HepG2 (cell line): ENCODE measurements at regions of chr11 and their contacts with region 1.

Region 1: DNA sequence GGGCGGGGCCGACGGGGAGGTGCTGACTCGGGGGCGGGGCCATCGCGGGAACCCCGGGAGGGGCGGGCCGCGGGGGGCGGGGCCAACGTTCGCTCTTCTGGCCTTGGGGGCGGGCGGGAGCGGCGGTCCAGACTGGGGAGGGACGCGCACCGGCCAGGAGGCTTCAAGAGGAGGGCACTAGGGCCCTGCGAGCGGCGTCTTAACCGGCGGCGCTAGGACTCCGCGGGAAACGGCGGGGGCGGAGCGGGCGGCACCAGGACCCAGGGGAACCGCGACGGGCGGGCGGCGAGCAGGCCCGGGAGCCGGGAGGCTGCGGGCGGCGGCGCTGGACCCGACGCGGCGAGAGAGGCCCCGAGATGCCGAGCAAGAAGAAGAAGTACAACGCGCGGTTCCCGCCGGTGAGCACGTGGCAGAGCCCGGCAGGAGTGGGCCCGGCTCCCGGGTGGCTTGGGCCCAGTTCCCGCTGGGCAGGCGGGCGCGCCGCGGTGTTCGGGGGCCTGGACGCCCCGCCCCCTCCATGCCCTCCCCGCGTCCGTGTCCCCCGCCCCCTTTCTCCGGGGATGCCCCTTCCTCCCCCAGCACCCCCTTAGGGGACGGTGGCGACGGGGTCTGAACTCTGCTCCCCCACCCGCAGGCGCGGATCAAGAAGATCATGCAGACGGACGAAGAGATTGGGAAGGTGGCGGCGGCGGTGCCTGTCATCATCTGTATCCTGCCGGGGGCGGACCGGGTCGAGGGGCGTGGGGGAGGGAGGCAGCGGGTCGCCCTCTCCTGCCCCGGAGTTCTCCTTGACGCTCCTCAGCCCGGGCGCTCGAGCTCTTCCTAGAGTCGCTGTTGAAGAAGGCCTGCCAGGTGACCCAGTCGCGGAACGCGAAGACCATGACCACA is at the start of gene DRAP1:
- DNase-seq: peak; percentile 94
- ATAC-seq: peak; percentile 89
- H3K4me3 ChIP-seq: peak within 1 kb of the TSS; percentile 88 to 98 (median 92)
- H3K27ac ChIP-seq: peak within 1 kb of the TSS; percentile 75
- H3K4me1 ChIP-seq: peaks cover 46% of the 10 kb centered on the region
- H3K27me3 ChIP-seq: no peaks in the 10 kb centered on the region
- CTCF ChIP-seq: 0 out of 2 replicates have a peak, but pooled peaks have one; percentile 17
- EP300 ChIP-seq: peak in 1 of 2 experiments; percentile 36; a peak in 1 of 4 replicates
- POLR2A ChIP-seq: peak in 1 of 2 experiments; percentile 46; a peak in 2 of 4 replicates
- RAD21 ChIP-seq: peak; percentile 79
- total RNA-seq, gene DRAP1: 31.5 and 52.3 TPM in 2 replicates

Region 2: GRCh38 chr11:65773784-65774411 is 145.5 kb before region 1 on chr11:
- CTCF ChIA-PET with region 1: no interaction called
- POLR2A ChIA-PET with region 1: no interaction called
- in situ Hi-C with region 1: no loop called
- intact Hi-C with region 1: no loop called
- DNase-seq: no peak
- ATAC-seq: no peak
- H3K4me3 ChIP-seq: no peak overlapping the region
- H3K27ac ChIP-seq: no peak overlapping the region
- H3K4me1 ChIP-seq: peaks cover 38% of the 10 kb centered on the region
- H3K27me3 ChIP-seq: no peaks in the 10 kb centered on the region
- CTCF ChIP-seq: peak; percentile 45
- EP300 ChIP-seq: no peak
- POLR2A ChIP-seq: no peak
- RAD21 ChIP-seq: no peak

Region 3: DNA sequence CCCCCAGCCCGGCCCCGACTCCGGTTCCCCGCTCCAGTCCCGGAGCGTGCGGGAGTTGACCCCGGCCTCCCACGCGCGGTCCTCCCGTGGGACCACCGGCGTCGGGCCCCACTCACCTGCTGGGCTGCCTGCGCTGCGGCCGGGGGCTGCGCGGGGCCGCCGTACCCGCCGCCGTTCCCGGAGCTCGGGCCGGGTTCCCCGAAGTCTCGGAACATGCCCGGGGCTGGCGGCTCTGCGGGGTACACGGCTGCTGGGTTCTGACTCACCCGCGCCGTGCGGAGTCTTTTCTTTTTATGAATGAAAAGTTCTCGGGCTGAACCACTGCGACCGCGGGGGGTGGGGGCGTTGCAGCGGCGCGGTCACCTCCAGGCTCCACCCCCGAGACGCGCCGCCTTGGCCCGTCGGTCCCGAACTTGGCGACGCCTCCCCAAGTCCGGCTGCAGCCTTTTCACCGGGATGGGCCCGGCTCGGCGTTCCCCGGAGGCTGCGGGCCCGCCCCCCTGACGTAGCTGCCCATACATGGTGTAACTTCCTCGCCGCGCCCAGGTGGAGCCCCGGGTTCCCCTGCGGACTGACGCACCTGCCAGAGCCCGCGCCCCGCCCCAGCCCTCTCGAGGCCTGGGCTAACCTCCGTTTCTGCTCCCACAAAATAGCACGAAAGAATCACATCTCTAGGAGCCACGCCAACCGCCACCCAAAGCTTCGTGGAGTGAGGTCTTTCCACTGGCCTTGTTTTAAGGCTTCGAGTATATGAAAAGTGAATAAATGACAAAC is 19.1 kb before region 1 on chr11 and contains the start of gene FOSL1:
- CTCF ChIA-PET with region 1: no interaction called
- POLR2A ChIA-PET with region 1: interaction called, 12 read pairs
- in situ Hi-C with region 1: no loop called
- intact Hi-C with region 1: no loop called
- DNase-seq: peak; percentile 85
- ATAC-seq: peak; percentile 74
- H3K4me3 ChIP-seq: peak within 1 kb of the TSS; percentile 84 to 89 (median 89)
- H3K27ac ChIP-seq: peak within 1 kb of the TSS; percentile 66
- H3K4me1 ChIP-seq: peaks cover 55% of the 10 kb centered on the region
- H3K27me3 ChIP-seq: no peaks in the 10 kb centered on the region; a peak in 1 of 5 replicates
- CTCF ChIP-seq: peak; percentile 15; the same call in 1 of the 2 replicates
- EP300 ChIP-seq: no peak
- POLR2A ChIP-seq: peak in 1 of 2 experiments; percentile 88; a peak in 2 of 4 replicates
- RAD21 ChIP-seq: peak; percentile 31; the same call in 1 of the 2 replicates
- total RNA-seq, gene FOSL1: 3.1 and 4.0 TPM in 2 replicates